Activated T-helper 1 cell treated with anti-CD3 and anti-CD28 coated beads, Interleukin-12 subunit alpha, Interleukin-12 subunit beta, Interleukin-2, Interleukin-4 antibody, amounts not matched to agents 30 ng/mL and 10 ng/mL and 1 ng/mL, durations not matched to agents 14 hours and 24 hours and 36 hours (primary cell): ENCODE measurements at regions of chr13 and their contacts with region 1.

Region 1: GRCh38 chr13:36999054-36999714 is at the start of gene ALG5:
- DNase-seq: peak; percentile 95
- H3K4me3 Mint-ChIP-seq: peak within 1 kb of the TSS; percentile 100
- H3K27ac Mint-ChIP-seq: peak within 1 kb of the TSS; percentile 100
- H3K4me1 Mint-ChIP-seq: peaks cover 37% of the 10 kb centered on the region
- H3K27me3 Mint-ChIP-seq: no peaks in the 10 kb centered on the region
- total RNA-seq, gene ALG5: 52.5 and 53.2 TPM in 2 replicates

Region 2: DNA sequence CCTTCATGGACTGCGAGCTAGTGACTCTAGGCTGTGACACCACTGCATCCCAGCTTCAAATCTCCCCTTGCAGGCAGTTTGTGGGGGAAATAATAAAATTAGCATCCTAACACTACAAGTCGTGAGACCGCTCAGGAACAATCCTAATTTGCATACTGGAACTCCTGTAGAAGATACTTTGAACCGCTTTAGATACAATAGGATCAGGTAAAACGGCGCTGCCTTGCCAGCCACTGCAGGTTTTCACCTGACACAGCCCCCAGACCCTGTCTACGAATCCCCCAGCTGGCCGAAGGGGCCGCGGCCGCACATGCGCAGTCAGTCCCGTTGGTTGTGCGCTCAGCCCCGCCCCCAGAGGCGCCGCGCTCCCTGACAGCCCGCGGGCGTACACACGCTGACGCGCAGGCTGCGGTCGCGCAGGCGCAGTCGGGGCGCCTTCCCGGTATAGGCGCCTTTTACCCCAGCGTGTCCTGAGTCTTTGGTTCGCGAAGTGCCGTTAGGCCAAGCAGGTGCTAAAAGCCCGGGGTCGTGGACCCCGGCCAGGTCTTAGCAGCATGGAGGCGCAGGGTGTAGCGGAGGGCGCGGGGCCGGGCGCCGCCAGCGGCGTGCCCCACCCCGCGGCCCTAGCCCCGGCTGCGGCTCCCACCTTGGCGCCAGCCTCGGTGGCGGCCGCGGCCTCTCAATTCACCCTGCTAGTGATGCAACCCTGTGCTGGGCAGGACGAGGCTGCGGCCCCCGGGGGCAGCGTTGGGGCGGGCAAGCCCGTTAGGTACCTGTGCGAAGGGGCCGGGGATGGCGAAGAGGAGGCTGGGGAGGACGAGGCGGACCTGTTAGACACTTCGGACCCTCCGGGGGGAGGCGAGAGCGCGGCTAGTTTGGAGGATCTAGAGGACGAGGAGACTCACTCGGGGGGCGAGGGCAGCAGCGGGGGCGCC is 180.1 kb before region 1 on chr13 and contains the start of gene RFXAP:
- intact Hi-C with region 1: loop called (anchors 1 kb)
- DNase-seq: peak; percentile 89
- H3K4me3 Mint-ChIP-seq: peak within 1 kb of the TSS; percentile 96
- H3K27ac Mint-ChIP-seq: peak within 1 kb of the TSS; percentile 92
- H3K4me1 Mint-ChIP-seq: peaks cover 60% of the 10 kb centered on the region
- H3K27me3 Mint-ChIP-seq: peaks cover 8% of the 10 kb centered on the region
- total RNA-seq, gene RFXAP: 19.0 and 19.8 TPM in 2 replicates

Region 3: GRCh38 chr13:36858290-36858689 is 140.9 kb before region 1 on chr13:
- intact Hi-C with region 1: loop called (anchors 5 kb)
- DNase-seq: no peak
- H3K4me3 Mint-ChIP-seq: no peak overlapping the region
- H3K27ac Mint-ChIP-seq: no peak overlapping the region
- H3K4me1 Mint-ChIP-seq: peaks cover 18% of the 10 kb centered on the region
- H3K27me3 Mint-ChIP-seq: peaks cover 2% of the 10 kb centered on the region

Region 4: DNA sequence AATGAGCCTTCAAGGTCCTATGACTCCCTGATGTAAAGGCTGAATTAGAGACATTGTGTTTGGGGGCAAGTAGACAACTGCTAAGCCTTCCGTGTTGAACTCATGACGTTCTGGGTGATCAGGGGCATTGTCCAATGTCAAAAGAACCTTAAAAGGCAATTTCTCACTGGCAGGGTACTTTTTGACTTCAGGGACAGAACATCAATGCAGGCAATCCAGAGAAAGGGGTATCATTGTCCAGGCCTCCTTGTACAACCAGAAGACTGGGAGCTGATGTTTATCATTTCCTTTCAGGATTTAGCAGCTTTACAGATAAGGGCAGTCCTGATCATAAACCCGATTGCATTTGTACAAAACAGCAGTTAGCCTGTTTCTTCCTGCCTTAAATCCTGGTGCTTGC is 54.1 kb before region 1 on chr13:
- intact Hi-C with region 1: no loop called
- DNase-seq: no peak
- H3K4me3 Mint-ChIP-seq: no peak overlapping the region
- H3K27ac Mint-ChIP-seq: no peak overlapping the region
- H3K4me1 Mint-ChIP-seq: no peaks in the 10 kb centered on the region
- H3K27me3 Mint-ChIP-seq: peaks cover 5% of the 10 kb centered on the region

Region 5: DNA sequence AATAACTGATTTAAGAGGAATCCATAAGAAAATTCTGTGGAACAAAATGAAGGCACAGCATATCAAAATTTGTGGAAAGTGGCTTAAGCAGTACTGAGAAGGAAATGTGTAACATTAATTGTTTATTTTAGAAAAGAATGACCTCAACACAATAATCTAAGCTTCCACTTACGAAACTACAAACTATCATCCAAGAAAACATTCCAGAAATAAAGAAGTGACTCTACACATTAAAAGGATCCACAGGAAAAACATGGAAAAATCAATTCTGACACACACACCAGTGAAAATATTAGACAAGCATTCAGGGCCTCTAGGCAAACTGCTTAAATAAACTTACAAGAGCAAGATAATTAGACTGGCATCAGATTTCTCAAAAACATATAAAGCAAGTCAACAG is 15.4 kb after region 1 on chr13:
- intact Hi-C with region 1: no loop called
- DNase-seq: no peak
- H3K4me3 Mint-ChIP-seq: no peak overlapping the region
- H3K27ac Mint-ChIP-seq: no peak overlapping the region
- H3K4me1 Mint-ChIP-seq: peaks cover 7% of the 10 kb centered on the region
- H3K27me3 Mint-ChIP-seq: no peaks in the 10 kb centered on the region

Region 6: DNA sequence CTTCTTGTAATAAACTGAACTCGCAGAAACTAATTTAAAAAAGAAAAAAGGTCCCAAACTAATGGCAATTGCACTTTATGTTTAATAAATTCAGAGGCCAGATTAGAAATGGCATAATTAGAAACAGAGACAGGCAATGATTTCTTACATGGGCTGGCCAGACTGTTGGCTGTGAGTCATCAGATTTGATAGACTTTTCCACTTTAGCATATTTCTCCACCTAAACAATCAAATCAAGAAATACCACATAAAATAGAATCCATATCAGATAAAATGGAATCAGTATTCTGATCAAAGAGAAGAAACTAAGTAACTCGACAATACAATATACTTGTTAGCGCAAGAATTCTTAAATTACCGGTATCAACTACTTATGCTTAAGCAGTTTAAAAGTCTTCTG is 30.4 kb after region 1 on chr13:
- intact Hi-C with region 1: loop called (anchors 2 kb)
- DNase-seq: no peak
- H3K4me3 Mint-ChIP-seq: no peak overlapping the region
- H3K27ac Mint-ChIP-seq: no peak overlapping the region
- H3K4me1 Mint-ChIP-seq: no peaks in the 10 kb centered on the region
- H3K27me3 Mint-ChIP-seq: no peaks in the 10 kb centered on the region

Region 7: DNA sequence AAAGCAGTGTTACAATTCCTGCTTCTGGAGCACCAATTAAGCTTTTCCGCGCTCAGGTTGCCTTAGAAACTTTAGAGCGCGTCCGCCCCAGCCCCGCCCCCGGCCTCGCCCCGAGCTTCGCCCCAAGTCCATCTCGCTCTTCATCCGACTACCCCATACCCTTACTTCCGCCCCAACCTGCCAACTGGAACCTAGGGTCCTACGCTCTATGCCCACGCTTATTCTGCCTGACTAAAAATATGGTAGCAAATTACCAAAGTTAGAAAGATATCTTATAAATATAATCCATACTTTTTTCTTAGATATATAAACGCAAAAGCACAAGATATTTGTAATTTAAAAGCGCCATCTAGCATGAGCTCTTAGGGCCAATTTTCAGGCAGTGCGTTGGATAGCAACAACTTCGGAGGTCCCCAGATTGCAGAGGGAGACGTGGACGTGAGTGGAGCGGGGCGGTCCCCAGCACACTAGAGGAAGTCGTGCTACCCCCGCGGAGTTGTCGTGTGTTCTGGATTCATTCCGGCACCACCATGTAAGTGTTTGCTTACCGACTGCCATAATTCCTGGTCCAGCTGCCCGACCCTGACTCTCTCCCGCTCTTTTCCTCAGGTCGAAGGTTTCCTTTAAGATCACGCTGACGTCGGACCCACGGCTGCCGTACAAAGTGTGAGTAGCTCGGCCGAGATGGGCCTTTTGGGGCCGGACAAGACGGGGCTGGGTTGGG is 1350.4 kb after region 1 on chr13 and contains the start of gene UFM1:
- intact Hi-C with region 1: loop called (anchors 1 kb)
- DNase-seq: peak; percentile 81
- H3K4me3 Mint-ChIP-seq: peak within 1 kb of the TSS; percentile 98
- H3K27ac Mint-ChIP-seq: peak within 1 kb of the TSS; percentile 100
- H3K4me1 Mint-ChIP-seq: peaks cover 36% of the 10 kb centered on the region
- H3K27me3 Mint-ChIP-seq: peaks cover 3% of the 10 kb centered on the region
- total RNA-seq, gene UFM1: 66.9 and 71.3 TPM in 2 replicates